ENCODE measurements at regions of chr11 and their contacts with region 1.

Region 1: GRCh38 chr11:13183094-13183825 is 94.3 kb upstream of the BMAL1 start:
- DNase-seq: peak; percentile 28
- ATAC-seq: peak; percentile 74
- H3K4me3 ChIP-seq: peak overlapping the region in 1 of 3 experiments; percentile 3; a peak in 1 of 6 replicates
- H3K27ac ChIP-seq: no peak overlapping the region
- H3K4me1 ChIP-seq: peaks cover 9% of the 10 kb centered on the region
- H3K27me3 ChIP-seq: no peaks in the 10 kb centered on the region; a peak in 1 of 5 replicates
- CTCF ChIP-seq: peak; percentile 63
- EP300 ChIP-seq: no peak
- POLR2A ChIP-seq: no peak
- RAD21 ChIP-seq: no peak

Region 2: DNA sequence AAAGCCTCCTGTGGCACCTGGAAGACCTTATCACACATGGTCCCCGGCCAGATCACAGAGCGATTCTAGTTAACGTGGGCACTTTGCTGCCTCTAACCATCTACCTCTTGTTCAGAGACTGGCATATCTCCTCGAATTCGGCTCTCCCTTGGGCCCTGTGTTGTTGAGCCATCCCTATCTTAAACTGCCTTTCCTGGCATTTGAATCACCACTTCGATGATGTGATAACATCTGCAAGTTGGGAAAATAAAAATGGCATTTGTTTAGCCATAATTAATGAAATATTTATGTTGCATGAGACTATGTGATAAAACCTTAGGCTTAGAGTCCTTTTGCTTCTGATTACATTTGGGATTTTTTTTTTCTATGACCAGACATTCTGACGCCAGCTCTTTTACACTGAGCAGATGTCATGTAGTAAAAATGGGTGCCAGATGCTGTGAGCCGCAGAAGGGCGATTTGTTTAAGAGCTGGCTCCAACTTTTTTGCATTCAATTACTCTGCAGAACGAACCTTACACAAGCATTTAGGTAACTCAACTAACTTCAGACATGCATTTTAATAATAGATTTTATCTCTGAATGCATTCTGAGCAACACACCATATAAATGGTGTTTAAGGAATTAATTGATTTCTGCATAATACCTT is 864.3 kb before region 1 on chr11:
- CTCF ChIA-PET with region 1: no interaction called
- POLR2A ChIA-PET with region 1: no interaction called
- in situ Hi-C with region 1: loop called (anchors 25 kb)
- intact Hi-C with region 1: no loop called
- DNase-seq: no peak
- ATAC-seq: no peak
- H3K4me3 ChIP-seq: no peak overlapping the region
- H3K27ac ChIP-seq: no peak overlapping the region
- H3K4me1 ChIP-seq: no peaks in the 10 kb centered on the region
- H3K27me3 ChIP-seq: peaks cover 1 to 6% of the 10 kb centered on the region in 2 experiments; a peak in 1 of 5 replicates
- CTCF ChIP-seq: no peak
- EP300 ChIP-seq: no peak
- POLR2A ChIP-seq: no peak
- RAD21 ChIP-seq: no peak

Region 3: DNA sequence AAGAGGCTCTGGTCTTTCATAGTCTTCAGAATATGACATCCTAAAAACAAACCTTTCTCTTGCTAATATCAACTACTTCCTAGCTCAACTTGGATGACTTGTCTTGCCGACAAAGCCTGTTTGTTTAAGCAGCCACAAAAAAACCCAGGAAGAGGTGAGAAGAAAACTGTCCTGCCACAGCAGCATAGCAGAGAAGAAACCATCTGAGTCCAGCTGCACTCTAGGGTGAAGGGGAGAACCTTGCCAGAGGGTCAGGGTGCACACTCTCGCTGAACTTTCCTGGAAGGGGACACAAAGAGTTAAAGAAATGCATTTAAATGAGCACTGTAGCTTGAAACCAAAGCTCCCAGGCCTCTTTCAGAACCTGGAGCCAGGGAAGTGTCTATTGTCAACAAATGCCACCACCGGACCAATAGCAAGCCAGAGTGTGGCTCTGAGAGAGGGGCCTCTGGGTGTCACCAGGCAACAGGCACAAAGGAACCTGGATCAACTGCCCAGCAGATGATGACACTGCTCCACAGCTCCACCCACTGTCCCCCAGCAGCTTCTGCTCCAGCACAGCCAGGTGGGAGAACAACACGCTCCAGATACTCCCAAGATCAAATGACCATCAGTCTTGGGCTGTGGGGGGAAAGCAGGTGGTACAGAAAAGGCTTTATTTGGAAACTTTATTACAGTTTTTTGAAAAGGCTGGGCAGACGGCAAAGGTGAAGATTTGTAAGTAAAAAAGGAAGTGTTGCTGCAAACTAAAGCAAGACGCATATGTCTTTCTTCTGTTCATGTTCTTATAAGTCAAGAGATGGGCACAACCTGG is 68.5 kb before region 1 on chr11:
- CTCF ChIA-PET with region 1: no interaction called
- POLR2A ChIA-PET with region 1: no interaction called
- in situ Hi-C with region 1: no loop called
- intact Hi-C with region 1: loop called (anchors 2 kb)
- DNase-seq: peak; percentile 94
- ATAC-seq: peak; percentile 100
- H3K4me3 ChIP-seq: peak overlapping the region in 2 of 3 experiments; percentile 5 to 47; a peak in 3 of 6 replicates
- H3K27ac ChIP-seq: peak overlapping the region; percentile 73
- H3K4me1 ChIP-seq: peaks cover 62% of the 10 kb centered on the region
- H3K27me3 ChIP-seq: no peaks in the 10 kb centered on the region
- CTCF ChIP-seq: peak; percentile 94
- EP300 ChIP-seq: peak; percentile 16 to 19; a peak in 1 of 4 replicates
- POLR2A ChIP-seq: no peak
- RAD21 ChIP-seq: peak; percentile 73

Measured in HepG2 (cell line).